ENCODE measurements at regions of chr11 and their contacts with region 1.

Region 1: GRCh38 chr11:45339729-45340519 is 53.8 kb upstream of the SYT13 start:
- DNase-seq: peak; percentile 84
- H3K4me3 ChIP-seq: peak overlapping the region; percentile 9
- H3K27ac ChIP-seq: no peak overlapping the region
- H3K27me3 ChIP-seq: peaks cover 15% of the 10 kb centered on the region
- CTCF ChIP-seq: peak; percentile 92

Region 2: DNA sequence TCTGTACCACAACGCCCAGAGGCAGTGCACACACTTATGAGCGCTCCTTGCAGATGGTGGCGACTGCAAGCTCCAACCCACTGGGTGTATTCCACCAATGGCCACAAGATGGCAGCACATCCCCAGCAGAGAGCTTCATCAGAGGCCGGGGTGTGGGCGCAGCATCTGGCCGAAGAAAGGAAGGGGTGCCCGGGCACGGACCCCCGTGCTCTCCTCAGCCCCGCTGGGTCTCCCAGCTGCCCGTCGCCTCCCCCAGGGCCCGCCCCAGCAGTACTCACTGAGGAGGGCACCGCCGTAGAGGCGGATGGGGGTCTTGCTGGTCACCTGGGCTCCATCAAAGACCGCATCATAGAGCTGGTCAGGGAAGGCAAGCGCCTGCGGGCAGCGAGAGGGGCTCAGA is 403.4 kb before region 1 on chr11:
- in situ Hi-C with region 1: loop called (anchors 25 kb)
- DNase-seq: peak; percentile 78
- H3K4me3 ChIP-seq: no peak overlapping the region
- H3K27ac ChIP-seq: no peak overlapping the region
- H3K27me3 ChIP-seq: peaks cover 3% of the 10 kb centered on the region
- CTCF ChIP-seq: peak; percentile 92

Region 3: DNA sequence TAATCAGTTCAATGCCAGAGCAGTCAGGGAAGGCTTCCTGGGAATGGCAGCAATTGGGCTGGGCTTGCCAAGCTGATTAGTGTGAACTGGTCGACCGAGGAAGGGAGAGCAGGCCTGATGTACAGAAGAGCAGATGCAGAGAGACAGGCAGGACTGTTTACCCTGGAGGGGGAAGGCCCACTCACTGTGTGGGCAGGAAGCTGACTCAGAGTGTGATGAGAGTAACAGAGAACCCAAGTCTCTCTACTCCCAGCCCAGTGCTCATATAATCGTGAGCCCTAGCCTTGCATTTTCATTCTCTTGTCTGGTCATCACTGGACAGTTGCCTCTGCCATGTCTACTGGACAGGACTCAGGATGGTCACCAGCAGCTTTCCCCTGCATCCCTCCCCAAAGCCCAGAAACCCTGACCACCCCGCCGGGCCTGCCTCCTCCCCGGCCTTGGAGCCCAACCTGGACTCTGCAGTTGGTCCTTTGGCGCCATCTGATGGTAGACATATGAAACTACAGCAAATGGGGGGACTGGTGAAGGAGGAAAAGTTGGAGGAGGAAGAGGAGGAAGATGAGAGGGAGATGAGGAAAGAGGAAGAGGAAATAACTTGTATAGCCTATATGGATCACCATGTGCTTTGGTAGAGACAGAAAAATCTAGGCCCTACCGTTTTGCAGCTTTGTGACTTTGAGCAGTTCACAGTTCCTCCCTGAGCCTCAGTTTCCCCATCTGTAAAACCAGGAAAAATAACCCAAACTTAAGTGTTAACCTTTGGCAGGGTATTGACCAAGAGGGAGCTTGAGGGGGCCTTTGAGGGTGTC is 236.9 kb before region 1 on chr11:
- in situ Hi-C with region 1: loop called (anchors 25 kb)
- DNase-seq: peak; percentile 78
- H3K4me3 ChIP-seq: no peak overlapping the region
- H3K27ac ChIP-seq: no peak overlapping the region
- H3K27me3 ChIP-seq: no peaks in the 10 kb centered on the region
- CTCF ChIP-seq: peak; percentile 96

Measured in brain microvascular endothelial cell (primary cell).